A673 (cell line): ENCODE measurements at regions of chr20 and their contacts with region 1.

Region 1: DNA sequence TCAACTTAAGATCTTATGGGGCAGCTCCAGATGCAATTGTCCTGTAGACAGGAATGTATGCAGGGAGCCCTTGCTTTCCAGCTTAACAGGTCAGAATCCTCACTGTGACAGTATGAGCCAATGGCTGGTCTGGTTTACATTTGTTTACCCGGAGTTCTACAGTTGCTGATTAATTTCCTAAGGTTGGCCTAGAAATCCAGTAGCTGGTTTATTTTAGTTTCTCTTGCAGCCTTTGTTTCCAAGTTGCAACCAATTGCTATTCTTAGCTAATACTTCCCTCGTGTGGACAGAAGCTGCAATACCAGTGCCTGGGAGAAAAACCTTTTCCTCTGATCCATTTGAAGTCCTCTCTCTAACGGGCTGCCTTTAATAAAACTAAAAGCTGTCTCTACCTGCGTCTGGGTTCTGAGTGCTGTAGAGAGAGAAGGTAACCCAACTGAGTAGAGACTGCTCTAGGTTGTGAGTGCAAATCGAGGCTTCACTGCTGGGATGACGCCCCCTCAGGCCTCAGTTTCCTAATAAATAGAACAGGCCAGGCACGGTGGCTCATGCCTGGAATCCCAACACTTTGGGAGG is 45.9 kb downstream of the ZNF217 start:
- DNase-seq: peak; percentile 87
- H3K4me3 ChIP-seq: no peak overlapping the region
- H3K27ac ChIP-seq: no peak overlapping the region
- H3K4me1 ChIP-seq: peaks cover 9% of the 10 kb centered on the region
- H3K27me3 ChIP-seq: no peaks in the 10 kb centered on the region
- CTCF ChIP-seq: peak; percentile 90

Region 2: DNA sequence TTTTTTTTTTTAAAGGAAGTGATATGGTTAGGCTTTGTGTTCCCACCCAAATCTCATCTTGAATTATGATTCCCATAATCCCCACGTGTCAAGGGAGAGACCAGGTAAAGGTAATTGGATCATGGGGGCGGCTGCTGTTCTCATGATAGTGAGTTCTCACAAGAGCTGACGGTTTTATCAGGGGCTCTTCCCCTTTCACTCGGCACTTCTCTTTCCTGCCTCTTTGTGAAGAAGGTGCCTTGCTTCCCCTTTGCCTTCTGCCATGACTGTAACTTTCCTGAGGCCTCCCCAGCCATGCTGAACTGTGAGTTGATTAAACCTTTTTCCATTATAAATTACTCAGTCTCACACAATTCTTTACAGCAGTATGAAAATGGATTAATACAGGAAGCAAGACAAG is 1420.4 kb before region 1 on chr20:
- CTCF ChIA-PET with region 1: interaction called, 3 read pairs
- POLR2A ChIA-PET with region 1: no interaction called
- intact Hi-C with region 1: loop called (anchors 2 kb)
- DNase-seq: no peak
- H3K4me3 ChIP-seq: no peak overlapping the region
- H3K27ac ChIP-seq: no peak overlapping the region
- H3K4me1 ChIP-seq: no peaks in the 10 kb centered on the region
- H3K27me3 ChIP-seq: no peaks in the 10 kb centered on the region
- CTCF ChIP-seq: no peak

Region 3: DNA sequence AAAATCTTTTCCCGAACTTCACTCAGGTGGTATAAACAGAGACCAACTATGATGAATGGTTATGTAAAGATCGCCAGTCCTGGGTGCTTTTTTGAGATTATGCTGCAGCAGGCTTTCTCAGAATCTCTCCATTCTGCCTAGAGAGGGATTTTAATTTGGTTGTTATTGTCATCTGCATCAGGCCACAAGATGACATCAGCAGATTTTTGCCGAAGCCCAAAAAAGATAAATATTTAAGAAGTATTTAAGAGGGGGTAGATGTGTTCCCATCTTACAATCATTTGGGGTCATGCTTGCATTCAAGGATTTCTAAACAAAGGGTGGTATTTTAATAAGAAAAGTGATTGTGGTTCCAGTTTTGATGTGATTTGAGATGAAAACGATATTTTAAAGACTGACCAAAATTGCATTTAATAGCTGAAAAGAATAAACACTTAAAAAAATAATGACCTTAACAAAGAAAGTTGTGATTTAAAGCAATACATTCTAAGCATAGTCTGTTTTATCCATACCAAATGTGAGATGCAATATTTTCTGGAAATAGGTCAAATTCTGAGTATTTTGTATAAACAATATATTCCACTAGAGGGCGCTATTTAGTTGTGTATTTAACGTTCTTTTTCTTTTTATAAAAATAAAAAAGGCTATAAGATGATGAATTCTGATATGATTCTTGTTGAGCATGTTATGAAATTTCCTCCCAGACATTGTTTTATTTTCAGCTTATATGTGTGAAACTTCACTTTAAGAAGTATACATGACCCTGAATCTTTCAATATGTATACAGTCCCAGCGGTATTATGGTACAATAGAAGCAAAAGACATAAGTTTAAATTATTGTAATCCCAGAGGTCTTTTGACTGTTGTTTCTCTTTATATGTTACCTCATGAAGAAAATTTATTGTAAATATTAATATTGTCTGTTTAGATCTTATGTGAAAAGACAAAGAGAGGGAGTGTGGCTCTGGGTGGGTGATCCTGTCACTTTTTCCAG is 1305.2 kb before region 1 on chr20:
- CTCF ChIA-PET with region 1: no interaction called
- POLR2A ChIA-PET with region 1: no interaction called
- intact Hi-C with region 1: loop called (anchors 1 kb)
- DNase-seq: peak; percentile 68
- H3K4me3 ChIP-seq: no peak overlapping the region
- H3K27ac ChIP-seq: peak overlapping the region; percentile 4
- H3K4me1 ChIP-seq: peaks cover 19% of the 10 kb centered on the region
- H3K27me3 ChIP-seq: no peaks in the 10 kb centered on the region
- CTCF ChIP-seq: peak; percentile 63

Region 4: GRCh38 chr20:52913650-52914387 is 633.9 kb before region 1 on chr20:
- CTCF ChIA-PET with region 1: interaction called, 13 read pairs
- POLR2A ChIA-PET with region 1: no interaction called
- intact Hi-C with region 1: no loop called
- DNase-seq: no peak
- H3K4me3 ChIP-seq: no peak overlapping the region
- H3K27ac ChIP-seq: no peak overlapping the region
- H3K4me1 ChIP-seq: no peaks in the 10 kb centered on the region
- H3K27me3 ChIP-seq: no peaks in the 10 kb centered on the region
- CTCF ChIP-seq: no peak

Region 5: GRCh38 chr20:53480913-53481312 is 66.8 kb before region 1 on chr20:
- CTCF ChIA-PET with region 1: no interaction called
- POLR2A ChIA-PET with region 1: no interaction called
- intact Hi-C with region 1: no loop called
- DNase-seq: no peak
- H3K4me3 ChIP-seq: no peak overlapping the region
- H3K27ac ChIP-seq: no peak overlapping the region
- H3K4me1 ChIP-seq: no peaks in the 10 kb centered on the region
- H3K27me3 ChIP-seq: no peaks in the 10 kb centered on the region
- CTCF ChIP-seq: no peak

Region 6: DNA sequence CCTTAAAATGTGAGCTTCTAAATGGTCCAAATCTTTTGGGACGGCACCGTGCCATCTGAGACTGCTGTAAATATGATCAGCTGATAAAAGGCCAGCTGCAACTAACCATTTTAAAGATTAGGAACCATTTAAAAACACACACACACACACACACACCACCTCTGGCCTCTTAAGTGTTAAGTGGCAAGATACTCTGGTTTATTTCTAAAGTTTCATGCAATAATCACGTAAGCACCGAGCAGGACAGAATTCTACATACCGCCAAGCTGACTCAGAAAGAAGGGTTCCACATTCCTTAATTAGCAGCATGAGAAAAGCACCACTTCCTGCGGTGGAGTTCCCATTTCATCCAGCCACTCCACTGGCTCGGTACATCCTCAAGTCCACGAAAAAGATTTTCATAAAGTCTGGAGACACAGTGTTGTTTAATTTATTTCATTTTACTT is 63.7 kb after region 1 on chr20:
- CTCF ChIA-PET with region 1: no interaction called
- POLR2A ChIA-PET with region 1: no interaction called
- intact Hi-C with region 1: no loop called
- DNase-seq: peak; percentile 87
- H3K4me3 ChIP-seq: no peak overlapping the region
- H3K27ac ChIP-seq: peak overlapping the region; percentile 39
- H3K4me1 ChIP-seq: peaks cover 52% of the 10 kb centered on the region
- H3K27me3 ChIP-seq: no peaks in the 10 kb centered on the region
- CTCF ChIP-seq: no peak

Region 7: DNA sequence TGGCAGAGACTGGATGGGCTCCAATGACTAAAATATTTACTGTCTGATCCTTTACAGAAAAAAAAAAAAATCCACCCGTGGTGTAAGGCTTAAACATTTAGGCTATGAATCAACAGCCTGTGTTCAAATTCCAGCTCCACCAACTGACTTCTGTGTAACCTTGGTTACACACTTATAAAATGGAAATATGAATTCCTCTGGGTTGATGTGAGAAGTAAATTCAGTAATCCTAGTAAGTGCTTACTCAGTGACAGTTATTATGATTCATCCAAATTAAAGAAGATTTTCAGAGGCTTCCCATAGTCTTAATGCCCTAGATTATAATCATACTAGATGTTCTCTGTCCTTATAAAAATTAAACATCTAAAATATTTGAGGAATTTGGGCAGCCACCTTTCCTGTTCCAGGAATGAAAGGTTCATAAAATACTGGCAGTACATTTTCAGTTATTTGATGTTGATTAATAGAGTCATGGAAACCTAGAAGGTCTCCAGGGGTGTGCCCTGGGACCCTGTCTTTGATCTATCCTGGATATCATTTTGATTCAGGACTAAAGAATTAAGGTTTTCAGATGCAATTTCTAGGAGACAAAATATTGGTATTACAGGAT is 226.1 kb after region 1 on chr20:
- CTCF ChIA-PET with region 1: no interaction called
- POLR2A ChIA-PET with region 1: no interaction called
- intact Hi-C with region 1: no loop called
- DNase-seq: peak; percentile 47
- H3K4me3 ChIP-seq: no peak overlapping the region
- H3K27ac ChIP-seq: peak overlapping the region; percentile 32
- H3K4me1 ChIP-seq: peaks cover 19% of the 10 kb centered on the region
- H3K27me3 ChIP-seq: no peaks in the 10 kb centered on the region
- CTCF ChIP-seq: no peak